ENCODE measurements at regions of chr11 and their contacts with region 1.

Region 1: GRCh38 chr11:119666463-119667131 is 62.4 kb downstream of the NECTIN1 start:
- DNase-seq: peak; percentile 76 to 90 (median 79)
- ATAC-seq: peak; percentile 86 to 94 (median 92)
- H3K4me3 ChIP-seq: no peak overlapping the region
- H3K27ac ChIP-seq: no peak overlapping the region
- H3K4me1 ChIP-seq: peaks cover 0 to 18% (median 11%) of the 10 kb centered on the region in 12 donors
- H3K27me3 ChIP-seq: no peaks in the 10 kb centered on the region
- CTCF ChIP-seq: peak; percentile 93 to 99 (median 96)
- POLR2A ChIP-seq: no peak

Region 2: DNA sequence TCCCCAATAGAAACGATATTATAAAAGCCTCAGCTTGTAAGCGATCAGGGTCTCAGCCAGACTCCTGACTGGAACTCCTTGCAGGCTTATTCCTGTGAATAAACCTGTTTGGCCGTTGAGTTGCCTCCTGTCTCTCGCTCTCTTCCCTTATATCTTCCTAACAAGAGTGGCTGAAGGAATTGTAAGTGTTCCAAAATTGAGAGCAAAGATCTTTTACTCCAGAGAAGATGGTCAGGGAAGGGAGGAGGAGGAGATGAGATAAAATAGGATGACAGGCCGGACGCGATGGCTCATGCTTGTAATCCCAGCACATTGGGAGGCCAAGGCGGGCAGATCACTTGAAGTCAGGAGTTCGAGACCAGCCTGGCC is 634.7 kb before region 1 on chr11:
- intact Hi-C with region 1: no loop called
- DNase-seq: no peak
- ATAC-seq: no peak
- H3K4me3 ChIP-seq: no peak overlapping the region
- H3K27ac ChIP-seq: no peak overlapping the region
- H3K4me1 ChIP-seq: peaks cover 0 to 25% (median 12%) of the 10 kb centered on the region in 12 donors
- H3K27me3 ChIP-seq: no peaks in the 10 kb centered on the region
- CTCF ChIP-seq: no peak
- POLR2A ChIP-seq: no peak

Region 3: DNA sequence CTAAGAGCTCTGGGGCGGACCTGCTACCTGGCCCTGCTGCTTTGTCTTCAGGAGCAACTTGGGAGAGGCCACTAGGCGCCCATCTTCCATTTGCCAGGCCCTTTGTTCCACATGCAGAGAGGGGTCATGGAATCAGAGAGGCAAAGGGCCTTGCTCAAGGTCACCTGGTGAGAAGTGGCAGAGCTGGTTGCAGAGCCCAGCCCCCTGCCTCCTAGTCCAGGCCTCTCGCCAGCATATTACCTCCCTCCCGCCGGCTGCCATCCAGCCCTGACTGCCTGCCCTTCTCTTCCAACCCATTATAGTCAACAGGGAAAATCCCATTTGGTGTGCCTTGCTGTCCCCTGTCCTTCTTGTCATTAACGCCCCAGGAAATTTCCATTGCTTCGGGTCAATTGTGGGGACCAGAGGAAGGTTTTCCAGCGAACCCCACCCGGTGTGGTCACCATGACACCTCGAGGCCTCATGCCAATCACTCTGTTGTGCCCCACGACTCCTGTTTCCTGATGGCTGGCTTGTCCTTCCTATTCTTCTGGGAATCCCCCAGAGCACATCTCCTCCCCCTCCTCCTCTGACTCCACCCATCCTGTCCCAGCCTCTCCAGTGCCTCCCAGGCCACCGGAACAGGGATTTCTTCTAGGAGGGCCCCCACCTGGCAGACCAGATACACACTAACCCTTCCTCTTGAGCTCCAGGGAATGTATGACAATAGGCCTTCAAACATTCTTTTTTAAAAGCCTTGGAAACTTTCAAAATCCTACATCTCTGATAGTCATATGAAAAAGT is 14.6 kb before region 1 on chr11:
- intact Hi-C with region 1: no loop called
- DNase-seq: peak in 1 of 5 donors; percentile 22
- ATAC-seq: peak in 3 of 4 donors; percentile 47 to 74 (median 59)
- H3K4me3 ChIP-seq: no peak overlapping the region
- H3K27ac ChIP-seq: no peak overlapping the region
- H3K4me1 ChIP-seq: peaks cover 0 to 9% (median 0%) of the 10 kb centered on the region in 12 donors
- H3K27me3 ChIP-seq: no peaks in the 10 kb centered on the region
- CTCF ChIP-seq: no peak
- POLR2A ChIP-seq: no peak

Region 4: GRCh38 chr11:119741369-119742262 is 75.0 kb after region 1 on chr11:
- intact Hi-C with region 1: loop called in 1 of 10 experiments (anchors 1 kb)
- DNase-seq: peak; percentile 49 to 82 (median 52)
- ATAC-seq: peak; percentile 62 to 87 (median 78)
- H3K4me3 ChIP-seq: peak overlapping the region in 9 of 12 donors; percentile 12 to 38 (median 25)
- H3K27ac ChIP-seq: no peak overlapping the region
- H3K4me1 ChIP-seq: peaks cover 0 to 13% (median 0%) of the 10 kb centered on the region in 12 donors
- H3K27me3 ChIP-seq: peaks cover 0 to 25% (median 9%) of the 10 kb centered on the region in 9 donors
- CTCF ChIP-seq: peak; percentile 73 to 88 (median 79)
- POLR2A ChIP-seq: no peak

Region 5: DNA sequence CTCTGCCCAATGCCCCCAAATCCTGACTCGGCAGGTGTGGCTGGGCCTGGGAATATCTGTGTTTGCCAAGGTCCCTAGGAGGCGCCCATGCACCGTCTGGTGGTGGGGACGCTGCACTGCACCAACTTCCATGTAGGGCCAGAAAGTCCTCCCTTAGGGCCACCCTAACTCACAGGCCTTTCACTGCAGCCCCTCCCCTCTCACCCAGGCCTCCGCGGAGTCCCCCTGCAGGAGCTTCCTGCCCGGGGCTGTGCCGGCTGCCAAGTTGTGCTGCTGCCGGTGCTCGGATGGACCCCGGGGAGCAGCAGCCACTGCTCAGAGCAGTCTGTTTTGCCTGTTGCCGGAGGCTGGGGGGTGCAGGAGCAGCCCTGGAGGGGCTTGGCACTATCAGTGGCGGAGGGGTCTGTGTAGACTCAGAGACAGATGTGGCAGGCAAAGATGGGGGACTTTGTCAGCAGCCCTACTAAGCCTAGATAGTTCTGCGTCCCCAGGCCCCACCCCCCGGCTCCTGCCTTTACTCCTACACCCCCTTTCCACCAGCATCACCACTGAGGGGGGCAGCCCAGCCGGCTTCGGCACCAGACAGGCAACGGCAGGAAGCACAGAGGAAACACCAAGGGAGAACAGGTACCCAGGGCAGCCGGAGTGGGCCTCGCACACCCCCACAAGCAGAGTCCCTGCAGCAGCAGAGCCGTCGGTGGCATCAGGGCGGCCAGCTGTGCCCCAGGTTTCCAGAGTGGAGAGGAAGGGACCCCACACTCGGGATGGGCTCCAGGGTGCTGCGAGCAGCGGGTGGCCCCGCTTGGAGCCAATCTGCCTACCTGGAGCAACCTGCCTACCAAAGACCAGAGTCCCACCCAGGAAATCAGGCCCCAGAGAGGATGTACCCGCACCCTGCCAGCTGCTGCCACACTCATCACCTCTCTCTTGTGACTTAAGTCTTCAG is 347.0 kb after region 1 on chr11:
- intact Hi-C with region 1: loop called (anchors 1 to 10 kb)
- DNase-seq: peak in 4 of 5 donors; percentile 37 to 57 (median 48)
- ATAC-seq: peak; percentile 74 to 92 (median 79)
- H3K4me3 ChIP-seq: no peak overlapping the region
- H3K27ac ChIP-seq: no peak overlapping the region
- H3K4me1 ChIP-seq: peaks cover 0 to 6% (median 0%) of the 10 kb centered on the region in 12 donors
- H3K27me3 ChIP-seq: peaks cover 0 to 72% (median 10%) of the 10 kb centered on the region in 9 donors
- CTCF ChIP-seq: peak; percentile 44 to 78 (median 67)
- POLR2A ChIP-seq: no peak

Region 6: GRCh38 chr11:120079750-120080490 is 413.3 kb after region 1 on chr11:
- intact Hi-C with region 1: loop called in 1 of 10 experiments (anchors 10 kb)
- DNase-seq: peak in 2 of 5 donors; percentile 42 to 68
- ATAC-seq: peak in 3 of 4 donors; percentile 47 to 62 (median 51)
- H3K4me3 ChIP-seq: no peak overlapping the region
- H3K27ac ChIP-seq: no peak overlapping the region
- H3K4me1 ChIP-seq: no peaks in the 10 kb centered on the region
- H3K27me3 ChIP-seq: peaks cover 0 to 17% (median 3%) of the 10 kb centered on the region in 9 donors
- CTCF ChIP-seq: peak; percentile 51 to 73 (median 62)
- POLR2A ChIP-seq: no peak

Region 7: GRCh38 chr11:120108154-120108865 is 441.7 kb after region 1 on chr11:
- intact Hi-C with region 1: loop called (anchors 1 to 5 kb)
- DNase-seq: peak; percentile 46 to 83 (median 63)
- ATAC-seq: peak; percentile 65 to 92 (median 83)
- H3K4me3 ChIP-seq: no peak overlapping the region
- H3K27ac ChIP-seq: no peak overlapping the region
- H3K4me1 ChIP-seq: no peaks in the 10 kb centered on the region
- H3K27me3 ChIP-seq: peaks cover 0 to 14% (median 0%) of the 10 kb centered on the region in 9 donors
- CTCF ChIP-seq: peak; percentile 96 to 100 (median 99)
- POLR2A ChIP-seq: no peak

Region 8: GRCh38 chr11:120172054-120172911 is 505.7 kb after region 1 on chr11:
- intact Hi-C with region 1: loop called in 3 of 10 experiments (anchors 5 kb)
- DNase-seq: peak; percentile 68 to 81 (median 71)
- ATAC-seq: peak; percentile 37 to 75 (median 64)
- H3K4me3 ChIP-seq: no peak overlapping the region
- H3K27ac ChIP-seq: no peak overlapping the region
- H3K4me1 ChIP-seq: peaks cover 0 to 25% (median 8%) of the 10 kb centered on the region in 12 donors
- H3K27me3 ChIP-seq: peaks cover 0 to 60% (median 21%) of the 10 kb centered on the region in 9 donors
- CTCF ChIP-seq: peak; percentile 73 to 93 (median 84)
- POLR2A ChIP-seq: no peak

Measured in heart left ventricle (tissue), 16 donors.